ENCODE measurements at regions of chr4 and their contacts with region 1.

Region 1: GRCh38 chr4:155759405-155760252 is 808 bp downstream of the GUCY1B1 start:
- DNase-seq: peak; percentile 68 to 82
- ATAC-seq: peak; percentile 37 to 64 (median 51)
- H3K4me3 ChIP-seq: peak overlapping the region; percentile 76
- H3K27ac ChIP-seq: peak overlapping the region; percentile 72
- H3K4me1 ChIP-seq: no peaks in the 10 kb centered on the region
- H3K27me3 ChIP-seq: peaks cover 0 to 23% (median 8%) of the 10 kb centered on the region in 3 donors
- CTCF ChIP-seq: no peak

Region 2: DNA sequence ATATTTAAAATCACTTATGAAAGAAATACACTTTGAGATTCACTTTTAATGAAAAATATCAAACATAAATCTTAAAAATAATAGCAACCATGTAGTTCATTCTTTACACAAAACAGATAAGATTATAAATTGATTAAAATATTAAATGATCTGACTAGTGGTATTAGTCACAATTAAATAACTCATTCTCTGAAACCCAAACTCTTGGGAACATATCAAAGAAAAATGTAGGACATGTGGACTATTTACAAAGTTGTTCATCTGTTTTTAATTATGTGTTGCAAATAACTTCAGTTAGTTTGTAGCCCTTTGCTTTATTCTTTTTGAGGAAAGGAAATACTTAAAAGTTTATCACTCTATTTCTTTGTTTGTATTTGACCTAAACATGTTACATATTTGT is 102.5 kb before region 1 on chr4:
- intact Hi-C with region 1: no loop called
- DNase-seq: no peak
- ATAC-seq: no peak
- H3K4me3 ChIP-seq: no peak overlapping the region
- H3K27ac ChIP-seq: no peak overlapping the region
- H3K4me1 ChIP-seq: no peaks in the 10 kb centered on the region
- H3K27me3 ChIP-seq: no peaks in the 10 kb centered on the region
- CTCF ChIP-seq: no peak

Region 3: GRCh38 chr4:155667568-155668511 is 91.8 kb before region 1 on chr4:
- intact Hi-C with region 1: loop called in 1 of 2 experiments (anchors 5 kb)
- DNase-seq: peak; percentile 32 to 64
- ATAC-seq: peak in 3 of 4 donors; percentile 36 to 67 (median 66)
- H3K4me3 ChIP-seq: peak overlapping the region; percentile 67
- H3K27ac ChIP-seq: peak overlapping the region; percentile 67
- H3K4me1 ChIP-seq: no peaks in the 10 kb centered on the region
- H3K27me3 ChIP-seq: peaks cover 0 to 24% (median 6%) of the 10 kb centered on the region in 3 donors
- CTCF ChIP-seq: no peak